Right ventricle myocardium superior (tissue), 1 donor: ENCODE measurements at regions of chr17 and their contacts with region 1.

Region 1: DNA sequence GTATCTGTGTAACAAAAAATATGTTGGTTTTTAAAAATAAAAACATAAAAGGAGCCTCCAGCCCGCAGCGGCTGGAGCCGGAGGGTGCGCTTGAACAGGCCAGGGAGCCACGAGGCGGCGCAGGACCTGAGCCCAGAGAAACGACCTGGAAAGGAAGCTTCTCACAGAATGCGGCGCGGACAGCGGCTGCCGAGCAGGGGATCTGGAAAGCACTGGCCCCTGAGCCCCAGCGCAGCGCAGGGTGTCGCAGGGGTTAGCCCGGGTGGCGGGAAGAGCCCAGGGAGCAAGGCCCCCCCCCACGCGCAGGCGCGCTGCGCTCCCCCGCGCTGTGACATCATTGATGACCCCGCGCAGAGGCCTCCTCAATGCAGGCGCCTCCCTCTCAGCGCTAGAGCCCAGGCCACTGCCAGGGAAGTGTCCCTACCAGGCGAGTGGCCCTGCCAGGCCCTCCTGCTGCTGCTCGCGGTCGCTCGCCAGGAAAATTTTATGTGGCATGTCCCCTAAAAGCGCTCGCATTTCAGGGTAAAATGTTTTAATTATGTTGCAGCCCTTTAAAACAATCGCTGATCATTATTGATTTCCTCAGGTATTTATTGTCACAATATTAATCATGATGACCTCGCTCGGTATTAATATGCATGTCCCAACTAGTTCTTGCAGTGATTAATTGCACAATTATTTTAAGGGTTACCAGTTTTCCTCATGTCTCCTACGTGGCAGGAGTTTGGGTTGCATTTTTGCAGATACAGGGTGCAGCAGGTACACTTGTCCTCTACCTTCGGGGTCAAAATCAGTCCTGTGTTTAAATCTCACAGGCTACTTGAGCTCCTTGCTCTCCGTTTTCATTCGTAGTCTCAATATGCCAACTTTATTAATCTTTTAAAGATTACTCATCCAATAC is 134.2 kb downstream of the USP22 start:
- DNase-seq: peak; percentile 94
- ATAC-seq: peak; percentile 100

Region 2: GRCh38 chr17:20774472-20775135 is 134.0 kb before region 1 on chr17:
- intact Hi-C with region 1: no loop called
- DNase-seq: no peak
- ATAC-seq: no peak

Region 3: GRCh38 chr17:20997711-20998570 is 89.3 kb after region 1 on chr17:
- intact Hi-C with region 1: loop called (anchors 5 kb)
- DNase-seq: no peak
- ATAC-seq: no peak